ENCODE measurements at regions of chr5 and their contacts with region 1.

Region 1: GRCh38 chr5:157142317-157143126 is at the start of gene MED7:
- DNase-seq: peak; percentile 95
- CTCF ChIP-seq: no peak

Region 2: DNA sequence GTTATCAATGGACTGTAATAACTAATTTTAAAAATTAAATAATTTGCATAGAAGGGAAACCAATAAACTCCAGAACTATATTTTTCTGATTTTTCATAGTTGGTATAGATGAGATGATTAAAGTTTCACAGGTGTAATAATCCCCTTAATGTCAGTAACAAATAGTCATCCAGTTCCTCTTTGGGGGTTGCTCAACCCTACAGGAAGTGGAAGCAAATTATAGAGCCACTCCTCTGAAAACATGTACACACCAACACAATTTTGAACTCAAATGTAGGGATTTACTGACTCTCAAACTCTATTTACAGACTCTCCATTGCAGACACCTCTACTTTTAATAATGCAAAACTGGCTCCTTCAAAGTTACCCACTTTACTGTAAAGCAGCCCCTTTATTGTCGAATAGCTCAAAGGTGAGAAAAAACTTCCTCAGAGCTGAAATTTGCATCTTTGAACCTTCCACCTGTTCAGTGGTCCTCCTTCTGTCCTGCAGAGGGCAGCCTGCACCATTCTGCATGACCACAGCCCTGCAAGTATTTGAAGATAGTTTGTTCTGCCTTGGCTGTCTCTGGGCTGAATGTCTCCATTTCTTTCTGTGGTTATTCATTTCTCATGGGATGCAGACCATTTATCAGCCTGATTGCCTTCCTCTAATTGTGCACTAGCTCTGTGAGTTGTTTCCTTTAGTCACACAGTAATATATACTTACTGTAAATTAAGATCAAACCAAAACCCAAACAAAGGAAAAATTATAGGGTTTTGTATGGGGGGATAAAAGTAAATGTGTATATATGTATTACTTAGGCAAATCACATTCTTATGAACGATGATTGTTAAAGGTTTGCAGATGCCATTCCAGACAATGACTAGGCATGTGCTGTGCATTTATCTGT is 1198.8 kb before region 1 on chr5:
- in situ Hi-C with region 1: loop called (anchors 25 kb)
- DNase-seq: peak; percentile 32
- CTCF ChIP-seq: peak; percentile 86

Region 3: GRCh38 chr5:156824800-156825199 is 317.7 kb before region 1 on chr5:
- in situ Hi-C with region 1: loop called (anchors 25 kb)
- DNase-seq: no peak
- CTCF ChIP-seq: peak; percentile 44

Region 4: GRCh38 chr5:157312492-157312891 is 170.0 kb after region 1 on chr5:
- in situ Hi-C with region 1: loop called (anchors 10 kb)
- DNase-seq: peak; percentile 87
- CTCF ChIP-seq: peak; percentile 82

Measured in GM13977 (cell line).